Caco-2 (cell line): ENCODE measurements at regions of chr10 and their contacts with region 1.

Region 1: DNA sequence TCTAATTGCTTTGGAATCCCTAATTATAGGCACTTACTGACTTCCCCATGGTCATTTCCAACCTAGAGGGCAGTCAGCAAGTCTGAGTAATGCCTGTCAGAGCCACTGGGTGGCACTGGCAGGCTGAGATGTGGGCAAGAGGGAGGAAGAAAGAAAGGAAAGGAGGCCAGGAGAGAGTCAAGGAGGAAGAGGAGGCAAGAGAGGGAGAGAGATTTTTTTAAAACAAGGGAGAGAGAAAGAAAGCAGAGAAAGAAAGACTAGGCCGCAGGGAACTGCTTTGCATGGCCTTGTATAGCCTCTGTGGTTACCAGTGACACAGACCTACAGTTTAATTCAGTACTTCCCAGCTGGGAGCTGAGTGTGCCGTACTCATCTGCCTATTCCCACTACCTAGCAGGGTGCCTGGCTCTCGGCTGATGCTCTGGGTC is 210.4 kb upstream of the ADO start:
- DNase-seq: peak; percentile 68 to 82
- H3K4me3 ChIP-seq: no peak overlapping the region
- H3K4me3 Mint-ChIP-seq: no peak overlapping the region
- H3K27ac Mint-ChIP-seq: no peak overlapping the region
- H3K4me1 ChIP-seq: no peaks in the 10 kb centered on the region
- H3K4me1 Mint-ChIP-seq: no peaks in the 10 kb centered on the region
- H3K27me3 ChIP-seq: no peaks in the 10 kb centered on the region
- H3K27me3 Mint-ChIP-seq: peaks cover 12% of the 10 kb centered on the region
- CTCF ChIP-seq: peak; percentile 99

Region 2: DNA sequence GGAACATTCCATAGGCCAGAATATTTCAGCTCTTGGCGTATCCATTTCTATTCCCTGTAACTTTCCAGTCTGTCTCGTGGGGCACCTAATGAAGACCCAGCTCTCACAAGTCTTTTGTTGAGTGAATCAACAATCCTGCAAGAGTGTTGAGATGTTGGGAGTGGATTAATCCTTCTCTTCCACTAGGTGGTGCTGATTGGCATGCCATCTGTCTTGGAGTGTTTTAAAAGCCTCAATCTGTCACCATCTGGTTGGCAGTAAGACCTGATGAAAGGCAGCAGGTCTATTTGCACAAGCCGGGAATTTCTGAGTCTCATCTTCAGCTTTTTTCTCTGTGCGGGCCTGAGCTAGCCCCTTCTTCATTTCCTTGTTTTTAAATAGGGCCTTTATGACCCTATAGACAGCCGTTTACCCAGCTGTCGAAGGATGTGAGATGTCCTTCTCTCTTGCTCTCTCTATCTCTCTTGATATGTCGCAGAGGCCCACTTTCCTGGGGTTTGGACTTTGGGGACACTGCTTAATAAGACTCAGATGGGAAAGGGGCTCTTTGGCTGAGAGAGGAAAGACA is 39.4 kb before region 1 on chr10:
- CTCF ChIA-PET with region 1: no interaction called
- POLR2A ChIA-PET with region 1: no interaction called
- intact Hi-C with region 1: no loop called
- DNase-seq: peak in 1 of 2 experiments; percentile 50
- H3K4me3 ChIP-seq: no peak overlapping the region
- H3K4me3 Mint-ChIP-seq: no peak overlapping the region
- H3K27ac Mint-ChIP-seq: no peak overlapping the region
- H3K4me1 ChIP-seq: no peaks in the 10 kb centered on the region
- H3K4me1 Mint-ChIP-seq: no peaks in the 10 kb centered on the region
- H3K27me3 ChIP-seq: no peaks in the 10 kb centered on the region; the same call in 1 of the 2 replicates
- H3K27me3 Mint-ChIP-seq: peaks cover 22% of the 10 kb centered on the region
- CTCF ChIP-seq: peak; percentile 52 to 74

Region 3: GRCh38 chr10:62610649-62611229 is 16.6 kb after region 1 on chr10:
- CTCF ChIA-PET with region 1: no interaction called
- POLR2A ChIA-PET with region 1: no interaction called
- intact Hi-C with region 1: loop called (anchors 2 kb)
- DNase-seq: peak; percentile 79 to 85
- H3K4me3 ChIP-seq: no peak overlapping the region
- H3K4me3 Mint-ChIP-seq: peak overlapping the region; percentile 6
- H3K27ac Mint-ChIP-seq: no peak overlapping the region
- H3K4me1 ChIP-seq: no peaks in the 10 kb centered on the region
- H3K4me1 Mint-ChIP-seq: no peaks in the 10 kb centered on the region
- H3K27me3 ChIP-seq: no peaks in the 10 kb centered on the region
- H3K27me3 Mint-ChIP-seq: peaks cover 18% of the 10 kb centered on the region
- CTCF ChIP-seq: peak; percentile 92 to 93

Region 4: DNA sequence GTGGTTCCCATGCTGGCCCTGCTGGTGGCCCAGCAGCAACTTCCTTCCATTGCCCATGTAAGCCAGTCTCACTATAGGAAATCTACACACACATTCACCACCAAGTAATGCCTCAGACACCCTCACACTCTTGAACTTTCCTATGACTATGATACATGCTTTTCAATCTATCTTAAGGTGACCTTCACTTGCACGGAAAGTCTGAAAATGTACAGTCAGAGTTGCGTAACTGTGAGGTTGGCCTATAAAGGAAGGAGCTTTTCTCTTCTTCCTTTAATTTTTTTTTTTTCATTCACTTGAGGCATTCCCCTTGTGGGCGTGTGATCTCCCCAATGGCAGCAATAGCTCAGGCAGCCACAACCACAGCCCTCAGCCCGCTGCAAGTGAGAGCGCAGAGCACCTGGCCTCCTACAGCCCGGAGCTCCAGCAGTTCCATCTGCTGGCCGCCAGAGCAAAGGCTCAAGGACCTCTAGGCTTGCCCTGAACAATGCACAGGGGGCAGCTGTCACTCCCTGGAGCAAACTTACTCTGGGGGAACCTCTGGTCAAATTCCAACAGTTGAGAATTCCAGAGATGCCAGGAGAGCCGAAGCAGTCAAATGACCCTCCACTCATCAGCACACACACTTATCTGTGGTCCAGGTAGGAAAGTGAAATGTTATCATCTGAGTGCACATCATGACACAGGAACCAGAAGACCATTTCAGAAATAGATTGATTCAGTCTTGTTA is 87.3 kb after region 1 on chr10:
- CTCF ChIA-PET with region 1: no interaction called
- POLR2A ChIA-PET with region 1: no interaction called
- intact Hi-C with region 1: loop called (anchors 2 kb)
- DNase-seq: peak; percentile 80 to 91
- H3K4me3 ChIP-seq: no peak overlapping the region
- H3K4me3 Mint-ChIP-seq: no peak overlapping the region
- H3K27ac Mint-ChIP-seq: no peak overlapping the region
- H3K4me1 ChIP-seq: peaks cover 13% of the 10 kb centered on the region
- H3K4me1 Mint-ChIP-seq: peaks cover 8% of the 10 kb centered on the region
- H3K27me3 ChIP-seq: no peaks in the 10 kb centered on the region
- H3K27me3 Mint-ChIP-seq: peaks cover 2% of the 10 kb centered on the region
- CTCF ChIP-seq: peak; percentile 32 to 65